Breast epithelium (tissue), 4 donors: ENCODE measurements at regions of chr12 and their contacts with region 1.

Region 1: GRCh38 chr12:122225683-122226407 is at the start of gene DIABLO:
- DNase-seq: peak; percentile 100
- H3K4me3 ChIP-seq: peak within 1 kb of the TSS; percentile 87 to 95 (median 93)
- H3K27ac ChIP-seq: peak within 1 kb of the TSS; percentile 97 to 98
- H3K4me1 ChIP-seq: peaks cover 13 to 15% of the 10 kb centered on the region in 2 donors
- H3K27me3 ChIP-seq: no peaks in the 10 kb centered on the region
- CTCF ChIP-seq: peak in 1 of 3 donors; percentile 10
- POLR2A ChIP-seq: peak; percentile 98
- total RNA-seq, gene DIABLO: 48.2 to 71.1 (median 62.3) TPM

Region 2: GRCh38 chr12:122126713-122127597 is 98.9 kb before region 1 on chr12:
- intact Hi-C with region 1: loop called (anchors 5 kb)
- DNase-seq: no peak
- H3K4me3 ChIP-seq: no peak overlapping the region
- H3K27ac ChIP-seq: no peak overlapping the region
- H3K4me1 ChIP-seq: peaks cover 0 to 3% of the 10 kb centered on the region in 2 donors
- H3K27me3 ChIP-seq: no peaks in the 10 kb centered on the region
- CTCF ChIP-seq: peak in 1 of 3 donors; percentile 42
- POLR2A ChIP-seq: no peak